ENCODE measurements at regions of chr6 and their contacts with region 1.

Region 1: DNA sequence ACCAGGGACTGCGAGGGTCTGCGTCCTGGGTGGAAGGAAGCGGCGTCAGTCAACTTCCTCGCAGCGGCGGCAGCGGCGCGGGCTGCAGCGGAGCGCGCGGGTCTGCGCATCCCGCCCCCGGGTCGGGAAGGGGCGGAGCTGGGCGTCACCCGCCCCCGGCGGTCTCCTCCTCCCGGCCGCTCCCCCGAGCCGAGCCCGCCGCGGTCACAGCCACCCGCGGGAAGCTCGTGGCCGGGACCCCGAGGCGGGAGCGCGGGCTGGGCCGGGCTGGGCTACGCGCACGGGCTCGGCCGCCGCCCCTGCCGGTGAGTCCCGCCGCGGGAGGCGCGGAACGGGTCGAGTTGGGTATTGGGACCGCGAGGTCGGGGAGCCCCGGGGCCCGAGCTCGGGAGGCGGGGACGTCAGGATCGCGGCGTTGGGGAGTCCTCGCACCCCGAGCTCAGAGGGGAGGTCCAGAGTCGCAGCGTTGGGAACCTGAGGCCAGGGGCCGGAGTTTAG is at the start of gene PAQR8:
- DNase-seq: peak; percentile 23
- H3K4me3 Mint-ChIP-seq: peak within 1 kb of the TSS; percentile 96
- H3K27ac Mint-ChIP-seq: peak within 1 kb of the TSS; percentile 77
- H3K4me1 Mint-ChIP-seq: peaks cover 16% of the 10 kb centered on the region
- H3K27me3 Mint-ChIP-seq: no peaks in the 10 kb centered on the region
- CTCF ChIP-seq: no peak
- total RNA-seq, gene PAQR8: 1.8 and 1.9 TPM in 2 replicates

Region 2: GRCh38 chr6:52263709-52264540 is 98.1 kb before region 1 on chr6:
- CTCF ChIA-PET with region 1: no interaction called
- POLR2A ChIA-PET with region 1: no interaction called
- intact Hi-C with region 1: no loop called
- DNase-seq: peak; percentile 65
- H3K4me3 Mint-ChIP-seq: no peak overlapping the region
- H3K27ac Mint-ChIP-seq: peak overlapping the region; percentile 16
- H3K4me1 Mint-ChIP-seq: no peaks in the 10 kb centered on the region
- H3K27me3 Mint-ChIP-seq: no peaks in the 10 kb centered on the region
- CTCF ChIP-seq: peak; percentile 90

Region 3: DNA sequence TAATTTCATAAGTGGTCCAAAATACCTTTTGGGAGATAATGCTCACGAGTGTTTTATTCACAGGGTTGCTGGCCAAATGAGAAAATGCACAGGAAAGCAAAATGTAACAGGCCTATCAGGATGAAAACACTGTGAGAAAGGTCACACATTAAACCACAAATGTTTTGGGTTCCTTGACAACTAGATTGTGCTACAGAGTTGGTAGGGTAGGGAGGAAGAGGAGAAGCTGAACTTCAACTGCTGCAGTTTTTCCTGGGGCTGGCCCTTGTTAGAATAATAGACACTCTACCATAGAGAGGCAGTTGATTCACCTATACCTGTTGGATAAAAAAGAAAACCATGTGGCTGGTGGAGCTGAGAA is 28.2 kb before region 1 on chr6:
- CTCF ChIA-PET with region 1: no interaction called
- POLR2A ChIA-PET with region 1: no interaction called
- intact Hi-C with region 1: no loop called
- DNase-seq: no peak
- H3K4me3 Mint-ChIP-seq: no peak overlapping the region
- H3K27ac Mint-ChIP-seq: peak overlapping the region; percentile 64
- H3K4me1 Mint-ChIP-seq: peaks cover 16% of the 10 kb centered on the region
- H3K27me3 Mint-ChIP-seq: no peaks in the 10 kb centered on the region
- CTCF ChIP-seq: no peak

Region 4: DNA sequence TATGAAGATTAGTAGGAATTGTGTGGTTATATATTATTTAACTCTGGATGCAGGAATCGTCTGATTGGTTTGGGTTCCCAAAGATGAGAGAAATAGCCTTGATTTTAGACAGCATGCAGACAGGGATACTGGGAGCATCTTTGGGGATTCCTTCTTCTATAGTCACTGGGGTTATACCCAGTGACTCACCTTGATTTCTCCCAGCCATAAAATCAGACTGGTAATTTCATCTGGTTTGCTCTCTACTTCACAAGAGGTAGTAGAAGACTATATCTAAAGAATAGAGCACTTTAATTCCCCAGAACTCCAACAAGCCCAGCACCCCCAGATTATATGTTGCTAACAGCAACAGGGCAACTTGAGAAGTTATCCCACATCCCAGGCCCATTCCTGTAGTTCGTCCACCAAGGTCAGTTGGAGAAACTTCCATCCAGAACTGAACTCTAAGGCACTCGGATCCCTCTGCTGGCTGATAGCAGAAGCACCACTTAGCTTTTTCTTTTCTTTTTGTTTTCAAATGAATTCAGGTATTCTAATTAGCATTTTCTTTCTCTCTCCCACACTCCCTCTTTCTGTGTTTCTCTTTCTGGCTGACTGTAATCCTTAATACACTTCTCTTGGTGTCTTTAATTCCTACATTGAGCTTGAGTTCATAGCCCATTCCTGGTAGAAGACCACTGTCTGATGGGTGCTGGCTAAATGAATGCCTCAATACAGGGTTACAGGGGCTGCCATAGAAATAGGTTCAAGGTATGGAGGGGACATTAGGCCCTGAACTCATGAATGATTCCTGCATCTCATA is 37.7 kb after region 1 on chr6:
- CTCF ChIA-PET with region 1: interaction called, 12 read pairs
- POLR2A ChIA-PET with region 1: no interaction called
- intact Hi-C with region 1: loop called (anchors 5 kb)
- DNase-seq: peak; percentile 70
- H3K4me3 Mint-ChIP-seq: no peak overlapping the region
- H3K27ac Mint-ChIP-seq: no peak overlapping the region
- H3K4me1 Mint-ChIP-seq: peaks cover 10% of the 10 kb centered on the region
- H3K27me3 Mint-ChIP-seq: no peaks in the 10 kb centered on the region
- CTCF ChIP-seq: peak; percentile 73

Region 5: GRCh38 chr6:52415333-52415732 is 53.3 kb after region 1 on chr6:
- CTCF ChIA-PET with region 1: no interaction called
- POLR2A ChIA-PET with region 1: no interaction called
- intact Hi-C with region 1: no loop called
- DNase-seq: no peak
- H3K4me3 Mint-ChIP-seq: no peak overlapping the region
- H3K27ac Mint-ChIP-seq: no peak overlapping the region
- H3K4me1 Mint-ChIP-seq: peaks cover 32% of the 10 kb centered on the region
- H3K27me3 Mint-ChIP-seq: no peaks in the 10 kb centered on the region
- CTCF ChIP-seq: no peak

Measured in MCF 10A (cell line).